ENCODE measurements at regions of chr19 and their contacts with region 1.

Region 1: DNA sequence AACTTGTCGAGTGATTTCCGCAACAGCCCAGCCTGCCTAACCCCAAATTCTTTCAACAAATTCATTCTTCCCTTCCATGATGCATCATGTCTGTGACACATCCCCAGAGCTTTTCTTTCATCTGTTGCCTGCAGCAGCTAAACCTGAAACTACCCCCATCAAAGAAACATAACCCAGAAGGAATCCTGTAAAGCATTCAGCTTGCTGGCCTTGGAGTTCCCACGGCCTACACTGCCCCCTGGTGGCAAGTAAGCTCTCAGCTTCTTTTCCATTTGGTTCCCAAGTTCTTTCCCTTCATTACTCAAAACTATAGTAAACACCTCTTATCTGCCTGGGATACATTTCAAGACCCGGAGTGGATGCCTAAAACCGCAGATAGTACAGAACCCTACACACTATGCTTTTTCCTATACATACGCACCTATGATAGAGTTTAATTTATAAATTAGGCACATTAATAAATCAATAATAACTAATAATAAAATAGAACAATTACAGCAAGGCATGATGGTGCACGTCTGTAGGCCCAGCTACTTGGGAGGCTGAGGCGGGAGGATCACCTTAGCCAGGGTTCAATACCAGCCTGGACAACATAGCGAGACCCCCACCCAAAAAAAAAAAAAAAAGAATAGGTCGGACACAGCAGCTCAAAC is 7.4 kb downstream of the ETHE1 start:
- DNase-seq: peak; percentile 73
- H3K4me3 ChIP-seq: peak overlapping the region in 1 of 2 experiments; percentile 18; a peak in 1 of 4 replicates
- H3K27ac ChIP-seq: no peak overlapping the region
- H3K4me1 ChIP-seq: no peaks in the 10 kb centered on the region; a peak in 1 of 4 replicates
- H3K27me3 ChIP-seq: no peaks in the 10 kb centered on the region
- CTCF ChIP-seq: peak; percentile 93
- EP300 ChIP-seq: no peak
- RAD21 ChIP-seq: peak; percentile 97

Region 2: GRCh38 chr19:43457809-43458208 is 61.8 kb before region 1 on chr19:
- CTCF ChIA-PET with region 1: interaction called, 31 read pairs
- POLR2A ChIA-PET with region 1: no interaction called
- DNase-seq: no peak
- H3K4me3 ChIP-seq: no peak overlapping the region
- H3K27ac ChIP-seq: no peak overlapping the region
- H3K4me1 ChIP-seq: peaks cover 2 to 5% of the 10 kb centered on the region in 2 experiments; a peak in 2 of 4 replicates
- H3K27me3 ChIP-seq: no peaks in the 10 kb centered on the region
- CTCF ChIP-seq: no peak
- EP300 ChIP-seq: no peak
- RAD21 ChIP-seq: no peak

Region 3: GRCh38 chr19:43474986-43475705 is 44.4 kb before region 1 on chr19:
- CTCF ChIA-PET with region 1: interaction called, 12 read pairs
- POLR2A ChIA-PET with region 1: no interaction called
- DNase-seq: peak; percentile 99
- H3K4me3 ChIP-seq: peak overlapping the region; percentile 18 to 35; a peak in 3 of 4 replicates
- H3K27ac ChIP-seq: peak overlapping the region; percentile 29 to 48; a peak in 2 of 4 replicates
- H3K4me1 ChIP-seq: peaks cover 3 to 5% of the 10 kb centered on the region in 2 experiments; a peak in 2 of 4 replicates
- H3K27me3 ChIP-seq: no peaks in the 10 kb centered on the region
- CTCF ChIP-seq: no peak
- EP300 ChIP-seq: no peak
- RAD21 ChIP-seq: no peak

Region 4: DNA sequence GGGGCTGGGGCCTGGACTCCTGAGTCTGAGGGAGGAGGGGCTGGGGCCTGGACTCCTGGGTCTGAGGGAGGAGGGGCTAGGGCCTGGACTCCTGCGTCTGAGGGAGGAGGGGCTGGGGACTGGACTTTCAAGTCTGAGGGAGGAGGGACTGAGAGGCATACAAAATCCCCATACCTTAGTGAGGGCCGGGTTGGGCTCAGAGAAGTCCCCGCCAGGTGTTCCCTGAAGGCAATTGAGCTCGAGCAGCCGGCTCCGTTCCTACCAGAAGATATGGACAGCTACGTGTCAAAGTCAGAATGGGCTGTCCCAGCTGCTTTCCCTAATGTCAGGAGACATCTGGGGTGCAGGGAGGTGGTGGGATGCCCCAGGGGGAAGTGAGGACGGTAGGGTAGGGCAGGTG is 24.5 kb before region 1 on chr19:
- CTCF ChIA-PET with region 1: interaction called, 15 read pairs
- POLR2A ChIA-PET with region 1: no interaction called
- DNase-seq: no peak
- H3K4me3 ChIP-seq: no peak overlapping the region
- H3K27ac ChIP-seq: no peak overlapping the region
- H3K4me1 ChIP-seq: no peaks in the 10 kb centered on the region
- H3K27me3 ChIP-seq: no peaks in the 10 kb centered on the region
- CTCF ChIP-seq: no peak
- EP300 ChIP-seq: no peak
- RAD21 ChIP-seq: no peak

Region 5: DNA sequence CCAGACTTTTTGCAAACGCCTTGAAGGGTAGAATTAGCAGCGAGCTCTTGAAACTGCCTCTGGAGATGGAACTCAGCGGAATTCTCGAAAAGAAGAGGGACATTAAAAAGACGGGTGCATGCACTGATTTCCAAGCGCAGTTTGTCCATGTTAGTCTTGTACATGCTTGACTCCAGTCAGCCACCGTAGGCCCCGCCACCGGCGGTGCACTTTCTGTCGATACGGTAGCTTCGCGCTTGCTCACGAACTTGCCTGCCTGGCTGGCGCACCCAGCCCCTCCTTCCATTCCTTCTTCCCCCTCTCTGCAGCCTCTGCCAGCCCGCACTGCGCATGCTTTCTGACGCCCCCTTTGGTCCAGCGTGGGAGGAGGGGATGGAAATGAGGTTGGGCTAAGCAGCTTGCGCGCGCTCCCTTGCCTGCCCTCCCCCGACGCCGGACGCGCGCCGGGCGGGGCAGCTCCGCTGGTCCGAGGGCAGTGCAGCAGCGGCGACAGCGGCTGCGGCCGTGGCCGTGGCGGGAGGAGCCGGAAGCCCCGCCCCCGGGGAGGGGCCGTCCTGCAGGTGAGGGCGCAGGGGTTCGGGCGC is 13.5 kb after region 1 on chr19 and contains the start of gene ZNF575:
- CTCF ChIA-PET with region 1: interaction called, 19 read pairs
- POLR2A ChIA-PET with region 1: no interaction called
- DNase-seq: peak; percentile 93
- H3K4me3 ChIP-seq: peak within 1 kb of the TSS; percentile 59 to 63
- H3K27ac ChIP-seq: peak within 1 kb of the TSS; percentile 78 to 95
- H3K4me1 ChIP-seq: peaks cover 0 to 10% of the 10 kb centered on the region in 2 experiments; a peak in 1 of 4 replicates
- H3K27me3 ChIP-seq: no peaks in the 10 kb centered on the region
- CTCF ChIP-seq: no peak
- EP300 ChIP-seq: no peak; a peak in 1 of 4 replicates
- RAD21 ChIP-seq: no peak
- polyA plus RNA-seq, gene ZNF575: 0.31 and 1.0 TPM in 2 replicates

Measured in SK-N-SH (cell line).